ENCODE measurements at regions of chr15 and their contacts with region 1.

Region 1: GRCh38 chr15:79970624-79971434 is at the start of gene BCL2A1:
- DNase-seq: peak; percentile 91
- H3K4me3 Mint-ChIP-seq: peak within 1 kb of the TSS; percentile 94
- H3K27ac Mint-ChIP-seq: peak within 1 kb of the TSS; percentile 96
- H3K4me1 Mint-ChIP-seq: peaks cover 47% of the 10 kb centered on the region
- H3K27me3 Mint-ChIP-seq: no peaks in the 10 kb centered on the region
- total RNA-seq, gene BCL2A1: 110 and 111 TPM in 2 replicates

Region 2: DNA sequence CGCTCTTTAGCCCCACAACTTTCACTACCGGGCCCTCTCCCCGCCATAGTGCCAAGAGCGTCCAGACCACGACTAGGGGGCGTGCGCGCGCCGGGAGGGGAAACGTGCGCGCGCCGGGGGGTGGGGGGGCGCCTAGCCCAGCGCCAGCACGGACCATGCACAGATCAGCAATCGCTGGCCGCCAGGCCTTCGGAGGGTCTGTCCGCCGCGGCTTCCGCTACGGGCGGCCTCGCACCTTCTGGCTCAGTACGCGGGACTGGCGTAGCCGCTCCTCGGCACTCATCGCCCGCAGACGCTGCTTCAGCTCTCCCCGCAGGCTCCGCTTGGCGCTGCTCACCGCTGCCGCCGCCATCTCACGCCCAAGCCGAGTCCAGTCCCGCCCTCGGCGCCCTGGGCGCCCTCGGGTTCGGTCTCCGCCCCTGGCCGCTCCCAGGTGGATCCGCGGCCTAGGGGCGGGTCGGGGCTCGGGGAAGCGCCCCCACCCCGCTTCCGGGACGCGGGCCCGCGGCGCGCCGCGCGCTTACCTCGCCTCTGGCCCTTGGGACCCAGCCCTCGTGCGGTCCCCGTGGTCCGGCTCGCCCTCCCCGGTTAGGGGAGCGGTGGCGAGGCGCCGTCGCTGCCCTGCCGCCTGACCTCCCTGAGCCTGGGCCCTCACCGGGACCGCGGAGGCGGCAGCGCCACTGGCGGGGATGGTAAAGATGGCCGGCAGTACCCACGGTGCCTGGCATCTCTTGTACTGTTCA is 74.0 kb before region 1 on chr15 and contains the start of gene MTHFS:
- intact Hi-C with region 1: loop called (anchors 1 kb)
- DNase-seq: peak; percentile 94
- H3K4me3 Mint-ChIP-seq: peak within 1 kb of the TSS; percentile 98
- H3K27ac Mint-ChIP-seq: peak within 1 kb of the TSS; percentile 100
- H3K4me1 Mint-ChIP-seq: peaks cover 36% of the 10 kb centered on the region
- H3K27me3 Mint-ChIP-seq: no peaks in the 10 kb centered on the region
- total RNA-seq, gene MTHFS: 34.5 and 35.3 TPM in 2 replicates

Region 3: GRCh38 chr15:79943820-79944219 is 27.0 kb before region 1 on chr15:
- intact Hi-C with region 1: loop called (anchors 2 kb)
- DNase-seq: no peak
- H3K4me3 Mint-ChIP-seq: no peak overlapping the region
- H3K27ac Mint-ChIP-seq: no peak overlapping the region
- H3K4me1 Mint-ChIP-seq: peaks cover 12% of the 10 kb centered on the region
- H3K27me3 Mint-ChIP-seq: peaks cover 2% of the 10 kb centered on the region

Region 4: GRCh38 chr15:80031841-80032240 is 61.0 kb after region 1 on chr15:
- intact Hi-C with region 1: loop called (anchors 1 kb)
- DNase-seq: peak; percentile 62
- H3K4me3 Mint-ChIP-seq: peak overlapping the region; percentile 59
- H3K27ac Mint-ChIP-seq: peak overlapping the region; percentile 79
- H3K4me1 Mint-ChIP-seq: peaks cover 26% of the 10 kb centered on the region
- H3K27me3 Mint-ChIP-seq: no peaks in the 10 kb centered on the region